ENCODE measurements at regions of chr5 and their contacts with region 1.

Region 1: GRCh38 chr5:156036640-156037039 is 290.3 kb upstream of the SGCD start:
- DNase-seq: no peak
- H3K4me3 ChIP-seq: no peak overlapping the region
- H3K27ac ChIP-seq: peak overlapping the region; percentile 81 to 87
- H3K4me1 ChIP-seq: peaks cover 0 to 3% of the 10 kb centered on the region in 2 donors
- H3K27me3 ChIP-seq: no peaks in the 10 kb centered on the region
- CTCF ChIP-seq: no peak

Region 2: GRCh38 chr5:155850370-155850769 is 186.3 kb before region 1 on chr5:
- intact Hi-C with region 1: no loop called
- DNase-seq: no peak
- H3K4me3 ChIP-seq: no peak overlapping the region
- H3K27ac ChIP-seq: no peak overlapping the region
- H3K4me1 ChIP-seq: no peaks in the 10 kb centered on the region
- H3K27me3 ChIP-seq: no peaks in the 10 kb centered on the region
- CTCF ChIP-seq: no peak

Region 3: GRCh38 chr5:156188016-156188415 is 151.4 kb after region 1 on chr5:
- intact Hi-C with region 1: loop called (anchors 10 kb)
- DNase-seq: no peak
- H3K4me3 ChIP-seq: no peak overlapping the region
- H3K27ac ChIP-seq: no peak overlapping the region
- H3K4me1 ChIP-seq: peaks cover 4 to 6% of the 10 kb centered on the region in 2 donors
- H3K27me3 ChIP-seq: no peaks in the 10 kb centered on the region
- CTCF ChIP-seq: no peak